OCI-LY7 (cell line): ENCODE measurements at regions of chr7 and their contacts with region 1.

Region 1: DNA sequence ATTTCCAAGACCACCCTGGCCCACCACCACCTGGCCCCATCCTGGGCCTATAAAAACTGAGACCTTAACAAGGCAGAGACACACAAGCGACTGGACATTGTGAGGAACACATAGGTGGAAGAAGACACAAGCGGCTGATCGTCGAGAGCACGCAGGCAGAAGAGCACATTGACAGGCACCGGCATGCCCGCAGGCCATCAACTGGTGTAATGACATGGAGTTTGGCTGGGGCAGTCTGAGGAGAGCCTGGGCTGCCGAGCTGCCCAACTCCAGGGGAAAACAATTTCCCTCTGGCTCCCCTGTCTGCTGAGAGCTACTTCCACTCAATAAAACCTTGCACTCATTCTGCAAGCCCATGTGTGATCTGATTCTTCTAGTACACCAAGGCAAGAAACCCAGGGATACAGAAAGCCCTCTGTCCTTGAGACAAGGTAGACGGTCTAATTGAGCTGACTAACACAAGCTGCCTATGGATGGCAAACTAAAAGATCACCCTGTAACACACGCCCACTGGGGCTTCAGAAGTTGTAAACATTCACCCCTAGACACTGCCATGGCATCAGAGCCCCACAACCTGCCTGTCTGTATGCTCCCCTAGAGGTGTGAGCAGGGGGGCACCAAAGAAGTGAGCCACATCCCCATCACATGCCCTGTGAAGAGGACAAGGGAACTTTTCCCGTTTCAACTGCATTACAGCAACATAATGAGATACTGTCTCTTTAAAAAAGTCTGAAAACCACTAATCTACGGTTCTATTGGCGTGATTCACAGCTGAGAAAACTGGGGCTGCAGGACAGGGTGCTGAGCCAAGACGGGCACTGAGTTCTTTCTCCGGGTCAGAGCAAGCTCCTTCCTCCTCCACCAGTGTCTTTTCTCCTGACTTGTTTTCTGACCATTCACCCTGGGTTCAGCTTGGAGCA is 18.5 kb upstream of the TNS3 start:
- DNase-seq: peak; percentile 23
- H3K4me3 ChIP-seq: peak overlapping the region; percentile 41
- H3K27ac ChIP-seq: peak overlapping the region; percentile 86
- H3K4me1 ChIP-seq: peaks cover 36% of the 10 kb centered on the region
- CTCF ChIP-seq: no peak

Region 2: GRCh38 chr7:47474937-47475878 is 125.3 kb before region 1 on chr7:
- CTCF ChIA-PET with region 1: no interaction called
- POLR2A ChIA-PET with region 1: no interaction called
- intact Hi-C with region 1: no loop called
- DNase-seq: peak; percentile 18
- H3K4me3 ChIP-seq: no peak overlapping the region
- H3K27ac ChIP-seq: no peak overlapping the region
- H3K4me1 ChIP-seq: peaks cover 34% of the 10 kb centered on the region
- CTCF ChIP-seq: no peak

Region 3: DNA sequence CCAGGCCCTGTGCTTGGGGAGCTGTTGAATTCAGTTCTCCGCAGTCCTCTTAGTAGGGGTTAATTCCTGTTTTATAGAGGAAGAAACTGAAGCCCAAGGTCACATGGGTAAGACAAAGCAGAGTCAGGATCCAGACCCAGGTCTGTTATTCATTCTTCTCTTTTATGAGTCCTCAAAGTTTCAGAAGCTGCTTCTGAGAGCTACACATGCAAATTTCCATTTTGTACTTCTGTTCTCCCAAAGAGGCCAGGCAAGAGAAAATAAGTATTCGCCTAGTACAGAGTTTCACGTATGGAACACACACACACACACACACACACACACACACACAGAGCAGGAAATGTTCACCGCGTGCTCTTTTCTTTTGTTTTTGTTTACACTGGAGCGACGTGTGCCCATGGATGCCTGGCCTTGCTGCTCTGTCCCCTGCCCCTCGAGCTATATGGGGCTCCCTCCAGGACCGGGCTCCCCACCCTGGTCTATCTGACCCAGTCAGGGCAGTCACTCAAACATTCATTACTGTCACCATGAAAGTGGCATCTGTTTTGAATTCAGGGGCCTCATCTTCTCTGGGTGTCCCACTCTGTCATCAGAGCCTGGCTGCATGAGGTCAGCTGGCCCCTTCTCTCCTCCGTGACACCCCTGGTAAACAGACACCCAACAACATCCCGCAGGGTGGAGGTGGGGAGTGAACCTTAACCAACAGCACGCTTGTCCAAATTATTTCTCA is 102.9 kb before region 1 on chr7:
- CTCF ChIA-PET with region 1: interaction called, 3 read pairs
- POLR2A ChIA-PET with region 1: interaction called, 6 read pairs
- intact Hi-C with region 1: loop called (anchors 5 kb)
- DNase-seq: peak; percentile 87
- H3K4me3 ChIP-seq: peak overlapping the region; percentile 32
- H3K27ac ChIP-seq: peak overlapping the region; percentile 86
- H3K4me1 ChIP-seq: peaks cover 53% of the 10 kb centered on the region
- CTCF ChIP-seq: no peak

Region 4: DNA sequence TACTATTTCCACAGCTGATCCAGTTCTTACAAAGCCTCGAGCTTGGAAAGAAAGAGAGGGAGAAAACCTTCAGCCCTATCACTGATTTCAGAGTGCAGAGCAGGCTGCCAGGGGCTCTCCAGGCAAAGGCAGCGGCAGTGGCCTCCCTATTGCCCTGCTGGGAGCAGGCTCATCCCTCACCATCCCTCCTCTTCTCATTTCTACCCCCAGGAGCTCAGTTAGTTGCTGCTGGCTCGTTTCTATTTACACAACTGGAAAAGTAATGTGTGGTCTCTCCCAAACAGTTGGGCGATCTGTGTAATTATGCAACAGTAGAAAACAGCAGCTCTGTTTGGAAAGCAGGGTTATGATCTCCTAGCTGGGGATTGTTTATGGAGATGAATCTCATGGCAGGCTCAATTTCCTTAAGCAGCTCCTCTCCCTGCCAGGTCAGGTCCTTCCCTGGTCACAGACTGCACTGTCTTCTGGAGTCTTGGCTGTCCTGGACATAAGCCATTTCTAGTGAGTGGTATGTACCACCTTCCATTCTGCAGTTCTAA is 10.1 kb after region 1 on chr7:
- CTCF ChIA-PET with region 1: no interaction called
- POLR2A ChIA-PET with region 1: interaction called, 19 read pairs
- intact Hi-C with region 1: no loop called
- DNase-seq: no peak
- H3K4me3 ChIP-seq: no peak overlapping the region
- H3K27ac ChIP-seq: no peak overlapping the region
- H3K4me1 ChIP-seq: peaks cover 7% of the 10 kb centered on the region
- CTCF ChIP-seq: no peak